ENCODE measurements at regions of chr2 and their contacts with region 1.

Region 1: DNA sequence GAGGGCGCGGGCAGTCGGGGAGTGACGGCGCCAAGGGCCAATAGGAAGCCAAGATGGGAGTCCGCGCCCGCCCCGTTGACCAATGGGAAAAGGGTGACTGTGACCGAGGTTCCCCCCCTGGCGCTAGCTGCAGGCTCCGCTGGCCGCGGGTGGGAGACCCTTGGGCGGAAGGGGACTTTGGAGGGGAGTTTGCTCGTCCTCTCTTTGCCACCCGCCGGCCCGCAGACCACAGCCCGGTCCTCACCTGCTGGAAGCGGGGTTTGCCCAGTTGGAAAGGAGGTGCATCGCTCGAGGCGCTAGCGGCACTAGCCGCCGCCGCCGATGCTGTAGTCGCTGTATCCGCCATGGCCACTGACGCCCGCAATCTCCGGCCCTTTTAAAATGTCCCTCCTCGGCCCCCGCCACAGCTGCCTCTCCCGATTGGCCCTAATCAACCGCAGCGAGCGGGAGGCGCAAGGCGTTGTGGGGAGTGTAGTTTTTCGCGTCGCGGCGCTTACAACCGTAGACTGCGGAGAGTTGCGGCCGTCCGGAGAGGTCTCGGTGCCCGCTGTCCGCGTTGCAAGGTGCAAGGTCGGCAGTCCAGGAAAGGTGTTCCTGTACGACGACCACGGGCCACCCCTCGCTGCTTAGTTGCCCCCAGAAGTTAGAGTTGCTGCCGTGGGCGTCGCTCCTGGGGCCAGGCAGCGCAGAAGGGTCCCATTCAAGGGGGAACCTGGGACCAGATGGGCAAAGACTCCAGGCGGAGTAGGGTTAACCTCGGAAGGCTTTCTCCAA is at the start of gene SFXN5:
- DNase-seq: peak; percentile 98
- ATAC-seq: peak; percentile 90
- H3K4me3 ChIP-seq: peak within 1 kb of the TSS; percentile 51 to 99 (median 86)
- H3K4me3 Mint-ChIP-seq: peak within 1 kb of the TSS; percentile 93
- H3K27ac ChIP-seq: peak within 1 kb of the TSS; percentile 77 to 84
- H3K27ac Mint-ChIP-seq: peak within 1 kb of the TSS; percentile 95
- H3K4me1 ChIP-seq: peaks cover 6 to 17% of the 10 kb centered on the region in 2 donors
- H3K4me1 Mint-ChIP-seq: peaks cover 24% of the 10 kb centered on the region
- H3K27me3 ChIP-seq: no peaks in the 10 kb centered on the region
- H3K27me3 Mint-ChIP-seq: no peaks in the 10 kb centered on the region
- CTCF ChIP-seq: no peak
- total RNA-seq, gene SFXN5: 16.9 and 17.8 TPM in 2 replicates

Region 2: DNA sequence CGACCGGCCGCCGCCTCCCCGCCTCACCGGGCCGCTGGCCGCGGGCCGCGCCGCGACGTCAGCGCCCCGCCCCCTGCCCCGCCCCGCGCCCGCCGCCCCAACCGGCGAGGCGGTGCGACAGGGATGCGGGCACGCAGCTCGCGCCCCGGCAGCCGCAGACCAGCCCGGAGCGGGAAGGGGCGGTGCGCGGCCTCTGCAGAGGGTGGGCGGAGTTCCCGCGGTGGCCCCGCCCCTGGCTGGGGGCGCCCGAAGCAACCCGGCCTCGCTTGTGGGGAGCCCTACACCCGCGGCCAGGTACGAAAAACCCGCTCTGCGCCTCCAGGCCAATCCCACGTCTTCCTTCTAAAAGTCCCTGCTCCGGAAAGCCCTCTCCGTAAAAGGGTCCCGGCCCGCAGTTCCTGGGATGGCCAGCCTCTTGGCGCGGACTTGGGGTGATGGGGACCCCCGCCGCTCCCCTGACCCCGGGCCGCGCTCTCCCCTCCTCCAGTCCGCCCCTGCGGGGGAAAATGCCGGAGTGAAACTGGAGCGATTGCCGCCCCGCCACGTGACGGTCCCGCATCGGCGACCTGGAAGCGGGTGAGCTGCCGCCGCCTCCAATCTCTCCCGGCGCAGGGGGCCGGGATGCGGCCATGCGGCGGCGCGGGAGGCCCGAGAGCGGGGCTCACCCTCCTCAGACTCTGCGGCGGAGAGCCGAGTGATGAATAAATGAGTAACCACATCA is 41.5 kb after region 1 on chr2 and contains the start of gene RAB11FIP5:
- CTCF ChIA-PET with region 1: no interaction called
- POLR2A ChIA-PET with region 1: interaction called, 3 read pairs
- intact Hi-C with region 1: loop called (anchors 1 kb)
- DNase-seq: peak; percentile 83
- ATAC-seq: peak; percentile 91
- H3K4me3 ChIP-seq: peak within 1 kb of the TSS; percentile 15 to 89 (median 74)
- H3K4me3 Mint-ChIP-seq: peak within 1 kb of the TSS; percentile 83
- H3K27ac ChIP-seq: peak within 1 kb of the TSS in 1 of 2 donors; percentile 53
- H3K27ac Mint-ChIP-seq: peak within 1 kb of the TSS; percentile 67
- H3K4me1 ChIP-seq: peaks cover 17% of the 10 kb centered on the region in 2 donors
- H3K4me1 Mint-ChIP-seq: peaks cover 8% of the 10 kb centered on the region
- H3K27me3 ChIP-seq: peaks cover 0 to 23% (median 8%) of the 10 kb centered on the region in 4 experiments
- H3K27me3 Mint-ChIP-seq: peaks cover 3% of the 10 kb centered on the region
- CTCF ChIP-seq: no peak
- total RNA-seq, gene RAB11FIP5: 4.6 and 5.1 TPM in 2 replicates